ENCODE measurements at regions of chr19 and their contacts with region 1.

Region 1: DNA sequence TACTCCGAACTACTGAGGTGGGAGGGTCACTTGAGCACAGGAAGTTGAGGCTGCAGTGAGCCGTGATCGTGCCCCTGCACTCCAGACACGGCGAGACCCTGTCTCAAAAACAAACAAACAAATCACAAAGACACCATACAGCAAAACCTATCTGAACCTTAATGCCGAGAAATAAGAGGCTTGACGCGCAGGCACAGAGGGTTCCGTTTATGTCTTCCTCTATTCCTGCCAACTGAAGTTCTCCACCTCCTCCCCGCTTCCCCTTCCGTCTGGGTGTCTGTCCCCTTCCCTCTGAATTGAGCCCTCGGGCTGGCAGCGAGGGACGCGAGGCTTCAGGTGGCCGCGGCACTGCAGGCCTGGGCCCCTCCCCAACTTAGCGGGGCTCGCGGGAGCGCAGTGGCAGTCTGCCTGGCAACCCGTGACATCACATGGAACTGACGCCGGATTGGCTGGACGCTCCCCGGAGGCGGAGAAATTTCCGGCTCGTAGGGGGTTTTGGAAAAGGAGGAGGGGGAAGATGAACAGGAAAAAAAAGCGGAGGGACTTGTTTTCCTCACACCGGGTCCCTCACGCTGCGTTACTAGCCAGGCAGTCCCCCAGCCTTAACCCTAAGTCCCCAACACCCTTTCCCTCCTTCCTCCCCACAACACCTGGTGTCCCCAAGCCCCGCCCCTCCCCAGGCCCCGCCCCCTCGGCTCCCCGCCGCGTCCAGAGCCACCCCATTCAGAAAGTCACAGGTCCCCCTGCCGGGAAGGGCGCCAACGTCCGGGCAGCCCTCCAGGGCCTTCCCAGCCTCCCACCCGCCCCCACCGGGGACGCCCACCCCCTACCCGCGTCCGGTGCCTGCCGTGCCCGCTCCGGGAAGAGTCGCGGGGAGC is 1.1 kb upstream of the MYBPC2 start:
- DNase-seq: peak; percentile 96
- ATAC-seq: peak; percentile 65
- H3K4me3 ChIP-seq: peak overlapping the region; percentile 35 to 66 (median 61)
- H3K4me3 Mint-ChIP-seq: peak overlapping the region; percentile 97
- H3K27ac ChIP-seq: peak overlapping the region; percentile 97 to 99
- H3K27ac Mint-ChIP-seq: peak overlapping the region; percentile 99
- H3K4me1 ChIP-seq: peaks cover 70 to 93% of the 10 kb centered on the region in 2 donors
- H3K4me1 Mint-ChIP-seq: peaks cover 84% of the 10 kb centered on the region
- H3K27me3 ChIP-seq: no peaks in the 10 kb centered on the region
- H3K27me3 Mint-ChIP-seq: no peaks in the 10 kb centered on the region
- CTCF ChIP-seq: no peak

Region 2: DNA sequence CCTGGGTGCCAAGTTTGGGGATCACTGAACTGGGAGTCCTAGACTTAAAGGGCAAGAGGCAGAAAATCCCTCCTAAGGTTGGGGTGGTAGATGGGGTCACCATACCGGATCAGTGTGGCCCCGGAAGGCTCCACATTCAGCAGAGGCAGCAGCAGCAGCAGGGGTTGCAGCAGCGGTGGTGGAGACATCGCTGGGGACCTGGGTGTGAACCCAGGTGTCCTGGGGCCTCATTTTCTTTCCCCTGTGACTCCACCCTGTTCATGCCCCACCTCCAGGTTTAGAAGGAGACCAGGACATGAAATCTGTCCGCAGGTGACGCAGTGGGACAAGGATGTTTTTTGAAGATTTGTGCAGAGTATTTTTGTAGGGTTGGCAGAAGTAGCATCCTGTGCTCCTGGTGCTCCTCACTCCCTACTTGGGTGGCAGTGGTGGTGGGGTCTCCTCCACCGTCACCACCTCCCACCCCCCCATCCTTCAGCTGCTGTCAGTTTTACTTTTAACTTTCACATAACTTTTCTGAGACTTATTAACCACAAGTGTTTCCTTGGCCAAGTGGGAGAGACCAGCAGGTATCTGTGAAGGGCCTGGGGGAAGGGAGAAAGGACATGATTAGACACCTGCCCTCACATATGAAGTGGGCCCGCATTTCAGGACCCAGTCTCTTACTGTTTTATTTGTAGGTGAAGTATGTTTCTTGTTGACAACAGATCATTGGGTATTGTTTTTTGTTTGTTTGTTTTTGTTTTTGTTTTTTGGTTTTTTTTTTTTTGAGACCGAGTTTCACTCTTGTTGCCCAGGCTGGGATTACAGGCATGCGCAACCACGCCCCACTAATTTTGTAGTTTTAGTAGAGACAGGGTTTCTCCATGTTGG is 65.9 kb before region 1 on chr19 and contains the start of gene NAPSA:
- CTCF ChIA-PET with region 1: no interaction called
- POLR2A ChIA-PET with region 1: no interaction called
- intact Hi-C with region 1: no loop called
- DNase-seq: no peak
- ATAC-seq: no peak
- H3K4me3 ChIP-seq: no peak within 1 kb of the TSS
- H3K4me3 Mint-ChIP-seq: peak within 1 kb of the TSS; percentile 26
- H3K27ac ChIP-seq: no peak within 1 kb of the TSS
- H3K27ac Mint-ChIP-seq: peak within 1 kb of the TSS; percentile 74
- H3K4me1 ChIP-seq: peaks cover 33 to 60% of the 10 kb centered on the region in 2 donors
- H3K4me1 Mint-ChIP-seq: peaks cover 49% of the 10 kb centered on the region
- H3K27me3 ChIP-seq: no peaks in the 10 kb centered on the region
- H3K27me3 Mint-ChIP-seq: no peaks in the 10 kb centered on the region
- CTCF ChIP-seq: no peak
- total RNA-seq, gene NAPSA: 3.5 and 4.7 TPM in 2 replicates

Region 3: DNA sequence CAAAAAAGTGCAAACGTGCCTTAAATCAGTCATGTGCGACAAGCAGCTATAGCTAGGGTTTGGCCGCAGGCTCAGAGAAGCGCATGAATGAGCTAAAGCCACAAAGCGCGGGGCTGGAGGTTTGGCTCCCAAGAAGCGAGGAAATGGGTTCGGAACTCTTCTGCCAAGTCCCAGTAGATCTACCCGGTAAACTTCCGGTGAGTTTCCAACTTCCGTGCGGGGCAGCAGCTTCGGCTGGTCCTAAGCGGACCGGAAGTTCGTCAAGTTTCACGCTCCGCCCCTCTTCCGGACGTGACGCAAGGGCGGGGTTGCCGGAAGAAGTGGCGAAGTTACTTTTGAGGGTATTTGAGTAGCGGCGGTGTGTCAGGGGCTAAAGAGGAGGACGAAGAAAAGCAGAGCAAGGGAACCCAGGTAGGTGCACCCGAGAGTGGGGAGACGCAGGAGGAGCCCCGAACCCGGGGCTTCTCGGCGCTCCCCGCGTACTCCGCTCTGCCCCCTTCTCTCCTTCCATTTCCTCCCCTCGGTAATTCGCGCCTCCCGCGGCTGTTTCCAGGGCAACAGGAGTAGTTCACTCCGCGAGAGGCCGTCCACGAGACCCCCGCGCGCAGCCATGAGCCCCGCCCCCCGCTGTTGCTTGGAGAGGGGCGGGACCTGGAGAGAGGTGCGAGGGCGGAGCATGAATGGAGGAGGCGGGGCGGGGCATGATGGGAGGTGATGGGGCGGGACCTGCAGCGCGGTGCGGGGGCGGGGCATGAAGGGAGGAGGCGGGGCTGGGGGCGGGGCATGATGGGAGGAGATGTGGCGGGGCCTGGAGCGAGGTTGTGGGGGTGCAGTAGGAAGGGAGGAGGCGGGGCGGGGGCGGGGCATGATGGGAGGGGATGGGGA is 55.2 kb before region 1 on chr19 and contains the start of gene NR1H2:
- CTCF ChIA-PET with region 1: no interaction called
- POLR2A ChIA-PET with region 1: no interaction called
- intact Hi-C with region 1: loop called (anchors 1 kb)
- DNase-seq: peak; percentile 99
- ATAC-seq: peak; percentile 87
- H3K4me3 ChIP-seq: peak within 1 kb of the TSS; percentile 30 to 98 (median 91)
- H3K4me3 Mint-ChIP-seq: peak within 1 kb of the TSS; percentile 97
- H3K27ac ChIP-seq: peak within 1 kb of the TSS; percentile 99 to 100
- H3K27ac Mint-ChIP-seq: peak within 1 kb of the TSS; percentile 99
- H3K4me1 ChIP-seq: peaks cover 6 to 14% of the 10 kb centered on the region in 2 donors
- H3K4me1 Mint-ChIP-seq: peaks cover 19% of the 10 kb centered on the region
- H3K27me3 ChIP-seq: no peaks in the 10 kb centered on the region
- H3K27me3 Mint-ChIP-seq: no peaks in the 10 kb centered on the region
- CTCF ChIP-seq: no peak
- total RNA-seq, gene NR1H2: 116 and 118 TPM in 2 replicates

Measured in B cell (primary cell).